ENCODE measurements at regions of chr7 and their contacts with region 1.

Region 1: DNA sequence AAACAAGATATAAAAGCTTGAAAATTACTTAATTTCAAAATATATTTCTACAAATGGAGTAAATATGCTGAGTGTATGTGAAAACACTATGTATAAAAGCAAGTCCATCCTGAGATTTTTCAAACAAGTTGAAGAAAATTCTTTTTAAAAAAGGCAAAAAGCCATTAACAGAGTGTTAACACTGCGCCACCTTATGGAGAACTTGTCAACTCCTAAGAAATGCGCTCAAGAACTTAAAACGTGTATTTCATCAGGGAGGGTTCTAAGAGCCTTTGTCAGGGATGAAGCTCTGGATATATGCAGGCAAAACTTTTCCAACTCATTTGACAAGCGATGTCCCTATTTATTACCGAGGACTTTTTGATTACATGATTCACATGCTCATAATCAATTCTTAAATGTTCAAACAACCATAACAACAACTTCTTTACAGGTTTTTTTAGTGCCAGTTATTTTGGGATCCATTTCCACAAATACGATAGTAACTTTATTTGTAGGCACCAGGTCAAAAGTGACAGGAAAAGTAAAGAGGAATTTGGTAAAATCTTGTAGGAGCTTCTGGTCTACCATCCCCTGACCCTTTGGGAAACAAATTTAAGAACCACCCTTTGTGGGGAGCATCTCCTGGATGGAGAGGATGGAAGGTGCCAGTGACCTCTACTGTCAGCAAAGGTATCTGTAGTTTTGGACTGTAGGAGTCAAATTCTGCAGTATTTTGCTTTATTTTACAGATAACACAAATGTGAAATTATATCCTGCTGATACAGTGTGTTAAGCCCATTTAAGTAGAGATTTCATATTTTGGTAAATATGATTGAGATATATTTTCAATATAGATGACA is 23.2 kb downstream of the CALCR start:
- DNase-seq: peak; percentile 5
- H3K4me3 ChIP-seq: no peak overlapping the region
- H3K27ac ChIP-seq: no peak overlapping the region
- H3K4me1 ChIP-seq: no peaks in the 10 kb centered on the region
- H3K27me3 ChIP-seq: peaks cover 6% of the 10 kb centered on the region
- CTCF ChIP-seq: peak; percentile 59 to 72

Region 2: GRCh38 chr7:93092757-93093370 is 458.4 kb before region 1 on chr7:
- CTCF ChIA-PET with region 1: no interaction called
- dilution Hi-C with region 1: no loop called
- in situ Hi-C with region 1: no loop called
- intact Hi-C with region 1: loop called (anchors 2 kb)
- DNase-seq: peak; percentile 38
- H3K4me3 ChIP-seq: no peak overlapping the region
- H3K27ac ChIP-seq: no peak overlapping the region
- H3K4me1 ChIP-seq: no peaks in the 10 kb centered on the region
- H3K27me3 ChIP-seq: peaks cover 2% of the 10 kb centered on the region
- CTCF ChIP-seq: peak; percentile 62 to 69

Region 3: GRCh38 chr7:93178212-93178611 is 373.1 kb before region 1 on chr7:
- CTCF ChIA-PET with region 1: no interaction called
- dilution Hi-C with region 1: no loop called
- in situ Hi-C with region 1: no loop called
- intact Hi-C with region 1: loop called (anchors 5 kb)
- DNase-seq: no peak
- H3K4me3 ChIP-seq: no peak overlapping the region
- H3K27ac ChIP-seq: no peak overlapping the region
- H3K4me1 ChIP-seq: no peaks in the 10 kb centered on the region
- H3K27me3 ChIP-seq: peaks cover 6% of the 10 kb centered on the region
- CTCF ChIP-seq: peak; percentile 34 to 40

Region 4: GRCh38 chr7:93245525-93246432 is 305.5 kb before region 1 on chr7:
- CTCF ChIA-PET with region 1: no interaction called
- dilution Hi-C with region 1: no loop called
- in situ Hi-C with region 1: loop called (anchors 10 kb)
- intact Hi-C with region 1: loop called (anchors 1 kb)
- DNase-seq: peak; percentile 6
- H3K4me3 ChIP-seq: no peak overlapping the region
- H3K27ac ChIP-seq: no peak overlapping the region
- H3K4me1 ChIP-seq: no peaks in the 10 kb centered on the region
- H3K27me3 ChIP-seq: no peaks in the 10 kb centered on the region
- CTCF ChIP-seq: peak; percentile 46 to 52

Region 5: GRCh38 chr7:93442478-93443224 is 108.6 kb before region 1 on chr7:
- CTCF ChIA-PET with region 1: no interaction called
- dilution Hi-C with region 1: no loop called
- in situ Hi-C with region 1: no loop called
- intact Hi-C with region 1: loop called (anchors 1 kb)
- DNase-seq: peak; percentile 19
- H3K4me3 ChIP-seq: no peak overlapping the region
- H3K27ac ChIP-seq: no peak overlapping the region
- H3K4me1 ChIP-seq: no peaks in the 10 kb centered on the region
- H3K27me3 ChIP-seq: peaks cover 8% of the 10 kb centered on the region
- CTCF ChIP-seq: peak; percentile 82 to 86

Region 6: GRCh38 chr7:93622036-93623033 is 71.1 kb after region 1 on chr7:
- CTCF ChIA-PET with region 1: no interaction called
- dilution Hi-C with region 1: no loop called
- in situ Hi-C with region 1: no loop called
- intact Hi-C with region 1: no loop called
- DNase-seq: peak; percentile 18
- H3K4me3 ChIP-seq: no peak overlapping the region
- H3K27ac ChIP-seq: no peak overlapping the region
- H3K4me1 ChIP-seq: no peaks in the 10 kb centered on the region
- H3K27me3 ChIP-seq: peaks cover 2% of the 10 kb centered on the region
- CTCF ChIP-seq: peak; percentile 43 to 57

Measured in mammary epithelial cell (primary cell).